Naive thymus-derived CD4-positive, alpha-beta T cell (primary cell): ENCODE measurements at regions of chr2 and their contacts with region 1.

Region 1: DNA sequence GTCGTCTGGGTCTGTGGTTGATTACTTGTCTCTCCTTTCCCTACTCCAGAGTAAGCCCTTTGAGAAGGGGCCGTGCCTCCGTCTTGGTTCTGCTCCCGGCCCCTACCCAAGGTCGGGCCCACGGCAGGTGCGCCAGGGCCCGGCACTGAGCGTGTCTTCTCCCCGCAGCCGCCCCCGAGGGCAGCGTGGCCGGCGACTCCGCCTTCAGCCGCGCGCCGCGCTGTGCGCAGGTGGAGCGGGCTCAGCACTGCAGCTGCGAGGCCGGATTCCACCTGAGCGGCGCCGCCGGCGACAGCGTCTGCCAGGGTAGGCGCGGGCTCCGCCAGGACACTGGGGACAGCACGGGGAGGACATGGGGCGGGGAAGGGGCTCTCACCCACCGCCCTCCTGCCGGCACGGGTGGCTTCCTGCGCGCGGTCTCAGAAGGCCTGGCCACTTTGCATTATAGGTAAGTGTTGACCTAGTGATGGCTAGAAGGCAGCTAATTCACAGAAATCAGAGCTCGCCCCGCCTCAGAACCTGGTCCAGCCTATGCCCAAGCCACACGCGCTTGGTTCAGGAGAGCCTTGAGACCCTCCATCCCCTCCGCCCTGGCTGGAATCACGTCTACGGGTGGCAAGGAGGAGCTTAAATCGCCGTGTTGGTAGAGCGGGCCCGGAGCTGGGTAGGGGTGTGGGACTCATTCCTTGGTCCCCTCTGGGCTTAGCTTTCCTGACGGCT is 43.5 kb downstream of the FBLN7 start:
- DNase-seq: peak; percentile 53 to 76 (median 71)
- ATAC-seq: peak; percentile 89
- H3K4me3 ChIP-seq: peak overlapping the region; percentile 71
- H3K4me3 Mint-ChIP-seq: peak overlapping the region; percentile 85 to 94 (median 90)
- H3K27ac ChIP-seq: peak overlapping the region; percentile 89
- H3K27ac Mint-ChIP-seq: peak overlapping the region; percentile 87 to 99 (median 96)
- H3K4me1 ChIP-seq: peaks cover 0 to 32% of the 10 kb centered on the region in 2 donors
- H3K4me1 Mint-ChIP-seq: peaks cover 28 to 71% (median 63%) of the 10 kb centered on the region in 7 donors
- H3K27me3 ChIP-seq: no peaks in the 10 kb centered on the region
- H3K27me3 Mint-ChIP-seq: peaks cover 0 to 11% (median 0%) of the 10 kb centered on the region in 5 donors

Region 2: DNA sequence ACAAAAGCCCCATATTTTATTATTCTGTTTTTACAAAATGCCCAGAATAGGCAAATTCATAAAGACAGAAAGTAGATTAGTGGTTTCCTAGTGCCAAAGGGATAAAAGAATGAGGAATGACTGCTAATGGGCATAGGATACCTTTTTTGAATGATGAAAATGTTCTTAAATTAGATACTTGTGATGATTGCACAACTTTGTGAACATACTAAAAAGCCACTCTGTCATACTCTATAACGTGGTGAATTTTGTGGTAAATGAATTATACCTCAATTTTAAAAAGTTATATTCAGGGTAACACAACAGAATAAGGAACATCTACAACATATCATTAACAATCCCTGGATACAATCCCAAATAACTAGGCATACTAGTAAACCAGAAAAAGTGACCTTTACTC is 52.7 kb before region 1 on chr2:
- CTCF ChIA-PET with region 1: no interaction called
- POLR2A ChIA-PET with region 1: interaction called, 5 read pairs
- intact Hi-C with region 1: loop called in 1 of 2 experiments (anchors 5 kb)
- DNase-seq: no peak
- ATAC-seq: no peak
- H3K4me3 ChIP-seq: no peak overlapping the region
- H3K4me3 Mint-ChIP-seq: no peak overlapping the region
- H3K27ac ChIP-seq: no peak overlapping the region
- H3K27ac Mint-ChIP-seq: no peak overlapping the region
- H3K4me1 ChIP-seq: no peaks in the 10 kb centered on the region
- H3K4me1 Mint-ChIP-seq: peaks cover 6 to 12% (median 11%) of the 10 kb centered on the region in 7 donors
- H3K27me3 ChIP-seq: no peaks in the 10 kb centered on the region
- H3K27me3 Mint-ChIP-seq: no peaks in the 10 kb centered on the region

Region 3: DNA sequence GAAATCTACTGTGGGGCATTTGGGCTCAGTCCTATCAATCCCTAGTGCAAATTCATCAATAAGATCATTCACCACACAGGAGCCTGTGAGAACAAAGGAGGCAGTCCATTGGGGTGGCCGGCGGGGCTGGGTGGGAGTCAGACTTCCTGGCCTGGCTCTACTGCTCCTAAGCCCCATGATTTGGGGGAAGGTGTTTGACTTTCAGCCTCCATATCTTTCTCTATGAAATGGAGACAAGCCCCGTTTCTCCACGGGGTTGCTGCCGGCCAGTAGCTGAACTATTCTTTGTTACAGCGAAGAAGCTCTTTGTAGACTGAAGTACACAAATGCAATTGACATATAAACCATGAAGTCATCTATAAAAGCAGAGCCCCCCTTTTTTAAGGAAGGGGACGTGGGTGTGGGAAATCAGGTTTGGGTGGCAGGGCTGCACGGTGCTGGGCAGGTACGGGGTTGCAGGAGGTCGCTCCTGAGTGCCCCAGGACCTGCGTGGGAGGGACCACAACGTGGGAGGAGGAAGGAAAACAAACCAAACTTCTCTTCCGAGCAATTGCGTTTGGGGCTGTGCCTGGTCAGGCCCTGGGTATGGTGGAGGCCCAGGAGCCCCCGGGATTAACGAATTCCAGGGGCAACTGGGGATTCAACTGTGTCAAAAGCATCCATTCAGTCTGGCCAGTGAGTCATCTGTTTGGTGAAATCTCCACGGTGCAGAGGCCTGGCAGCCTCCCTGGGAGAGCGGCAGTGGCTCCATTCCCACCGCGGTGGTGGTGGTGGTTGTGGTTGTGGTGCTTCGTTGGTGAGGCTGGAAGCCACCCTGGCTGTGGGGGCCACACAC is 25.4 kb before region 1 on chr2:
- CTCF ChIA-PET with region 1: no interaction called
- POLR2A ChIA-PET with region 1: interaction called, 26 read pairs
- intact Hi-C with region 1: loop called (anchors 1 to 2 kb)
- DNase-seq: peak in 6 of 9 donors; percentile 10 to 61 (median 22)
- ATAC-seq: peak; percentile 22
- H3K4me3 ChIP-seq: peak overlapping the region; percentile 25
- H3K4me3 Mint-ChIP-seq: peak overlapping the region; percentile 58 to 89 (median 84)
- H3K27ac ChIP-seq: peak overlapping the region; percentile 56
- H3K27ac Mint-ChIP-seq: peak overlapping the region; percentile 85 to 96 (median 90)
- H3K4me1 ChIP-seq: peaks cover 18 to 25% of the 10 kb centered on the region in 2 donors
- H3K4me1 Mint-ChIP-seq: peaks cover 15 to 47% (median 38%) of the 10 kb centered on the region in 7 donors
- H3K27me3 ChIP-seq: no peaks in the 10 kb centered on the region
- H3K27me3 Mint-ChIP-seq: no peaks in the 10 kb centered on the region

Region 4: GRCh38 chr2:112166806-112167499 is 14.8 kb before region 1 on chr2:
- CTCF ChIA-PET with region 1: interaction called, 3 read pairs
- POLR2A ChIA-PET with region 1: interaction called, 6 read pairs
- intact Hi-C with region 1: loop called in 1 of 2 experiments (anchors 2 kb)
- DNase-seq: peak in 2 of 9 donors; percentile 22 to 25
- ATAC-seq: peak; percentile 58
- H3K4me3 ChIP-seq: no peak overlapping the region
- H3K4me3 Mint-ChIP-seq: peak overlapping the region in 1 of 10 donors; percentile 7
- H3K27ac ChIP-seq: no peak overlapping the region
- H3K27ac Mint-ChIP-seq: peak overlapping the region; percentile 17 to 88 (median 33)
- H3K4me1 ChIP-seq: no peaks in the 10 kb centered on the region
- H3K4me1 Mint-ChIP-seq: peaks cover 7 to 22% (median 10%) of the 10 kb centered on the region in 7 donors
- H3K27me3 ChIP-seq: no peaks in the 10 kb centered on the region
- H3K27me3 Mint-ChIP-seq: no peaks in the 10 kb centered on the region

Region 5: DNA sequence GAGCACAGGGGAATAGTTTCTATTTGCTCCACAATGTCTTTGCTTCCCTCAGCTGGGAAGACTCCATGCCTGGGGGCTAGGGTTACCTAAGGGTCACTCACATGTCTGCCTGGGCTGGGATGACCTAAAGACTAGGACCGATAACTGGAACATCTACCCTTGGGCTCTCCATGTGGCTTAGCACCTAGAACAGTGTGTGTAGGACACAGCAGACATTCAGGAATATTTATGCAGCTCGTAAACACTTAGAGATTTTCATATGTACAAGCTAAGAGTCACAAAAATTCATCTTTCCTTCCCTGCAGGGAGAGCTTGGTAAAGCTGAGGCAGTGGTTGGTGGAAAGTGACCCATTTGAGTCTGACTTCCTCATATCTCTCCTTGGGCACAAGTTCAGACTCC is 12.3 kb after region 1 on chr2:
- CTCF ChIA-PET with region 1: interaction called, 17 read pairs
- POLR2A ChIA-PET with region 1: interaction called, 17 read pairs
- intact Hi-C with region 1: loop called in 1 of 2 experiments (anchors 1 kb)
- DNase-seq: no peak
- ATAC-seq: no peak
- H3K4me3 ChIP-seq: no peak overlapping the region
- H3K4me3 Mint-ChIP-seq: peak overlapping the region in 9 of 10 donors; percentile 18 to 75 (median 48)
- H3K27ac ChIP-seq: no peak overlapping the region
- H3K27ac Mint-ChIP-seq: peak overlapping the region; percentile 26 to 93 (median 80)
- H3K4me1 ChIP-seq: peaks cover under 1 to 53% of the 10 kb centered on the region in 2 donors
- H3K4me1 Mint-ChIP-seq: peaks cover 36 to 80% (median 70%) of the 10 kb centered on the region in 7 donors
- H3K27me3 ChIP-seq: no peaks in the 10 kb centered on the region
- H3K27me3 Mint-ChIP-seq: no peaks in the 10 kb centered on the region

Region 6: DNA sequence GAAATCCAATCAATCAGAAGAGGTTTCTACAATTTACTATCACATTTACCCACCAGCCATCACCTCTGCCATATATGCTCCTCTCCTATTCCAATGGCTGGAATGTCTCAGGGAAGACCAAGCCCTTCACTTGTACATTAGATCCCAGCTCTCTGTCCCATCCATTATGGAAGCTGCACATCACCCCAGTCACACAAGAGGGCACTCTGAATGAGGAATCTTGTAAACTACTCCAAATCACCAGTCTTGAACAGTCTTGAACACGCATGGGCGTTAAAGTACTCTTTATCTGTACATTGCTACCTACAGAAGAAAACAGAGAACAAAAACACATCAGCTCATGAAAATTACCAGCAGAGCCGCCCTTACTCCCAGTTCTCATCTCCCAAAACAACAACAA is 34.4 kb after region 1 on chr2:
- CTCF ChIA-PET with region 1: no interaction called
- POLR2A ChIA-PET with region 1: no interaction called
- intact Hi-C with region 1: loop called in 1 of 2 experiments (anchors 5 kb)
- DNase-seq: no peak
- ATAC-seq: no peak
- H3K4me3 ChIP-seq: no peak overlapping the region
- H3K4me3 Mint-ChIP-seq: no peak overlapping the region
- H3K27ac ChIP-seq: no peak overlapping the region
- H3K27ac Mint-ChIP-seq: peak overlapping the region in 4 of 9 donors; percentile 10 to 41 (median 33)
- H3K4me1 ChIP-seq: no peaks in the 10 kb centered on the region
- H3K4me1 Mint-ChIP-seq: peaks cover 0 to 10% (median 5%) of the 10 kb centered on the region in 7 donors
- H3K27me3 ChIP-seq: no peaks in the 10 kb centered on the region
- H3K27me3 Mint-ChIP-seq: no peaks in the 10 kb centered on the region